ENCODE measurements at regions of chr1 and their contacts with region 1.

Region 1: GRCh38 chr1:85555867-85556573 is 24.5 kb upstream of the CCN1 start:
- DNase-seq: peak; percentile 96
- H3K4me3 ChIP-seq: no peak overlapping the region
- H3K27ac ChIP-seq: peak overlapping the region; percentile 41
- H3K4me1 ChIP-seq: peaks cover 29% of the 10 kb centered on the region
- H3K27me3 ChIP-seq: no peaks in the 10 kb centered on the region
- CTCF ChIP-seq: no peak

Region 2: GRCh38 chr1:85321237-85321964 is 234.6 kb before region 1 on chr1:
- CTCF ChIA-PET with region 1: interaction called, 25 read pairs
- dilution Hi-C with region 1: loop called (anchors 25 kb)
- in situ Hi-C with region 1: no loop called
- intact Hi-C with region 1: no loop called
- DNase-seq: peak; percentile 85
- H3K4me3 ChIP-seq: no peak overlapping the region
- H3K27ac ChIP-seq: peak overlapping the region; percentile 30
- H3K4me1 ChIP-seq: peaks cover 54% of the 10 kb centered on the region
- H3K27me3 ChIP-seq: no peaks in the 10 kb centered on the region
- CTCF ChIP-seq: no peak

Region 3: DNA sequence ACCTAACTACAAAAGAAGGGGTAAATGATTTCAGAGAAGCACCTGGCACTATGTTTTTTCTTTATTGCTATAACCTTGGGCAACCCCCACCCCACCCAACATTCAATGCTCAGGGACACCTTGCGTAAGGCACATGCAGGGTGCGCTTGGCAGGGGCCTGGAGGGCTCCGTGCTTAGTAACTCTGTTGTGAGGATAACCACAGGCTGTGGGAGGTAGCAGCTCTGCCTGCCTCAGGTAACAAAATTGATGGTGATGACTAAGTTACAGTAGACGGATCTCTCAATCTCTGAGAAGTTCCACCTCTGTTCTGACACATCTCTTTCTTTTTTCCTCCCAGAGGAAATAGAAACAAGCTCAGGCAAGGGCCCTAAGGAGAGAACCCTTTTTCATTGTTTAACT is 15.8 kb after region 1 on chr1:
- CTCF ChIA-PET with region 1: no interaction called
- dilution Hi-C with region 1: no loop called
- in situ Hi-C with region 1: no loop called
- intact Hi-C with region 1: loop called (anchors 1 kb)
- DNase-seq: peak; percentile 97
- H3K4me3 ChIP-seq: no peak overlapping the region
- H3K27ac ChIP-seq: peak overlapping the region; percentile 89
- H3K4me1 ChIP-seq: peaks cover 68% of the 10 kb centered on the region
- H3K27me3 ChIP-seq: no peaks in the 10 kb centered on the region
- CTCF ChIP-seq: no peak

Measured in mammary epithelial cell (primary cell).